ENCODE measurements at regions of chr6 and their contacts with region 1.

Region 1: DNA sequence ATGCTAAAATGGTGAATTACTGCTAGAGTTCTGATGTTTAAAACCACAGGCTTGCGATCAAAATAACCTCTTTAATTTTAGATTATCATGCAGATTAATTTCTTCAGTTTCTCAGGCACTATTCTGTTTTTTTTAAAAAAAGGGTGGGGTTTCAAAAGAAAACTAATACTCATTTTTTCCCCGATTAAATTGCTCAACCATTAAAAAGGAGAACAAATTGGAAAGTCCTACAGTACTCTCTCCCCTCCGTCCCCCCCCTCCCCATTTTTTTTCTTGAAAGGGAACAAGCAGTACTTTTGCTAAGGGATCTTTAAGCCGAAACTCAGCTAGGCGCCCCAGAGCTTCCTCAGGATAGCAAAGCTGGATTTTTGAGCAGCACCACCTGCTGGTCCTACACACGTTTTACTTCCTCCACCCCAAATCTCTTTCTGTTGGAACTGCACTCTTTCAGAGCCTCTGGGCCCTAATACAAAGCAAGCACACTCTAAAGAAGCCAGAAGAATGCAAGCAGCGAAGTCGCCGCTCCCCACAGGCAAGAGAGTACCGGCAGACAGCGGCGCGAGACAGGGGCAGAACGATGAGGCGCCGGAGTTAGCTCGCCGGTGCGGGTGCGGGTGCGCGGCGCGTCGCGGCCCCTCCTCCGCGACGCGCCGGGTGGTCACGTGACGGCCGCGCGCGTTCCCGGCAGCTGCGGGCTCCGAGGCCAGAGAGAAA is at the start of gene RNF146:
- DNase-seq: peak; percentile 73
- ATAC-seq: peak; percentile 70
- H3K4me3 Mint-ChIP-seq: peak within 1 kb of the TSS; percentile 99
- H3K27ac Mint-ChIP-seq: peak within 1 kb of the TSS; percentile 100
- H3K4me1 Mint-ChIP-seq: peaks cover 29% of the 10 kb centered on the region
- H3K27me3 Mint-ChIP-seq: no peaks in the 10 kb centered on the region; the same call in 1 of the 2 replicates
- CTCF ChIP-seq: 0 out of 2 replicates have a peak, but pooled peaks have one; percentile 34
- total RNA-seq, gene RNF146: 27.3 to 30.4 TPM (median 30.0 TPM) in 3 replicates

Region 2: DNA sequence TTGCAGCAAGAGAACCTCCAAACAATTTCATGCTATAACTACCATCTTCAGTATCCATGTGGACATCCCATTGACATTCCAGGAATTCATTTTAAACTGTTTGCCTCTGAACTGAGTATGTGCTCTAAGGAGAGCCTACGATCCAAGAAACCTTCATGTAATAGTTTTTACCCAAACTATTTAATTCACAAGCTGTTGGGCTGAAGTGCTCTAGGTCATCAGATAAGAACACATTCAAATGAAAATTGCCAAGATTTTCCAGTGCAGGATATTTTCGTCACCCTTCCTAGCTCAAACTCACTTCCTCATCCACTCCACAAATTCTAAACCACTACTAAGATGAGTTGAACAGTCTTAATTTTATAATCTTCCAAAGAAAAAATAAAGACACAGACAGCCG is 135.1 kb before region 1 on chr6:
- CTCF ChIA-PET with region 1: no interaction called
- POLR2A ChIA-PET with region 1: no interaction called
- DNase-seq: no peak
- ATAC-seq: no peak
- H3K4me3 Mint-ChIP-seq: no peak overlapping the region
- H3K27ac Mint-ChIP-seq: no peak overlapping the region
- H3K4me1 Mint-ChIP-seq: no peaks in the 10 kb centered on the region
- H3K27me3 Mint-ChIP-seq: no peaks in the 10 kb centered on the region
- CTCF ChIP-seq: no peak

Region 3: DNA sequence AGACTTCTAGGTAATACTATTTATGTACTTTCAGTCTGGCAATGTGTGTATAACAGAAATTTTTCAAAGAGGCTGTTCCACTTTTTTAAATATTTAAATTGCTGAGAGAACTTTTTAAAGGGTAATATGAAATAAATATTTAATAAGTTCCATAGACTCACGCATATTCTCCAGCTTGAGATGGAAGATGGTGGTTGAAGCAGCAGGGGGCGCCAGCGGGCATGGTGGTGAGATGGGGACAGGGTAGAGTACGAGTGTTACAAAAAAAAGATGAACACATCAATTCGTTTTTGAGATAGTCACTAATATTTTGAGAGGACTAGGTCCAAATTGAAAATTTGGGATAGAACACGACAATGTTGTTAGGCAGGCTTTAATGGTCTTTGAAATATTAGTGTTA is 79.4 kb before region 1 on chr6:
- CTCF ChIA-PET with region 1: interaction called, 41 read pairs
- POLR2A ChIA-PET with region 1: interaction called, 4 read pairs
- DNase-seq: peak; percentile 81
- ATAC-seq: peak; percentile 80
- H3K4me3 Mint-ChIP-seq: no peak overlapping the region
- H3K27ac Mint-ChIP-seq: no peak overlapping the region
- H3K4me1 Mint-ChIP-seq: peaks cover 12% of the 10 kb centered on the region
- H3K27me3 Mint-ChIP-seq: no peaks in the 10 kb centered on the region
- CTCF ChIP-seq: peak; percentile 80

Region 4: GRCh38 chr6:127279815-127280214 is 13.5 kb after region 1 on chr6:
- CTCF ChIA-PET with region 1: interaction called, 10 read pairs
- POLR2A ChIA-PET with region 1: no interaction called
- DNase-seq: no peak
- ATAC-seq: no peak
- H3K4me3 Mint-ChIP-seq: no peak overlapping the region
- H3K27ac Mint-ChIP-seq: no peak overlapping the region
- H3K4me1 Mint-ChIP-seq: no peaks in the 10 kb centered on the region
- H3K27me3 Mint-ChIP-seq: no peaks in the 10 kb centered on the region
- CTCF ChIP-seq: no peak

Region 5: GRCh38 chr6:127291495-127291894 is 25.2 kb after region 1 on chr6:
- CTCF ChIA-PET with region 1: interaction called, 12 read pairs
- POLR2A ChIA-PET with region 1: interaction called, 4 read pairs
- DNase-seq: no peak
- ATAC-seq: no peak
- H3K4me3 Mint-ChIP-seq: no peak overlapping the region
- H3K27ac Mint-ChIP-seq: peak overlapping the region; percentile 55
- H3K4me1 Mint-ChIP-seq: peaks cover 25% of the 10 kb centered on the region
- H3K27me3 Mint-ChIP-seq: no peaks in the 10 kb centered on the region
- CTCF ChIP-seq: no peak

Measured in WTC11 (cell line).